HepG2 (cell line): ENCODE measurements at regions of chr17 and their contacts with region 1.

Region 1: DNA sequence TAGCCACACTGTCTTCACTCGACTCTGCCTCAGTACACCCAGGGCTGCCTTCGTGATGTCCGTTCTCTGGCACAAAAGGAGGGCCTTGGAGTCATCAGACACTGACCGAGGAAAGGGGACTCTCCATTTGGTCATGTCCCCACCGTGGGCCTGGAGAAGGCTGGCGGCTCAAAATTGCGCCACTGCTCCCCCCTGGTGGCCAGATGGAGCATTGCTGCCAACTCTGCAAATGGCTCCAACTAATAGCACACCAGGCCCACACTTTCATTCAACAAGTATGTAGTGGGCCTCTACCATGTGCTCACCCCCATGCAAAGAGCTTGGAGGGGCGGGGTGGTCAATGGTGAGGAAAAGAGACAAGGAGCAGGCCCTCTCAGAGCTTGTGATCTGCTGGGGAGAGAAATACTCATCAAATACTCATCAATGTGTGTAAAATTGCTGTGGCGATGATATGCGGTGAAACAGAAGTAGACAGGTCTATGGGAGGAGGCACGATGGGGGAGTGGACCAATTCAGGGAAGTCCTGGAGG is 5.2 kb upstream of the GRIN2C start:
- DNase-seq: peak; percentile 56
- ATAC-seq: peak; percentile 56
- H3K4me3 ChIP-seq: no peak overlapping the region
- H3K27ac ChIP-seq: no peak overlapping the region
- H3K4me1 ChIP-seq: peaks cover 58% of the 10 kb centered on the region
- H3K27me3 ChIP-seq: peaks cover 2 to 13% of the 10 kb centered on the region in 2 experiments; a peak in 3 of 5 replicates
- CTCF ChIP-seq: peak; percentile 98
- EP300 ChIP-seq: no peak
- POLR2A ChIP-seq: no peak
- RAD21 ChIP-seq: peak; percentile 81

Region 2: GRCh38 chr17:74842599-74843351 is 22.2 kb before region 1 on chr17:
- CTCF ChIA-PET with region 1: interaction called, 8 read pairs
- POLR2A ChIA-PET with region 1: interaction called, 6 read pairs
- in situ Hi-C with region 1: no loop called
- intact Hi-C with region 1: loop called (anchors 2 kb)
- DNase-seq: peak; percentile 52
- ATAC-seq: peak; percentile 84
- H3K4me3 ChIP-seq: peak overlapping the region; percentile 23 to 71 (median 50); a peak in 5 of 6 replicates
- H3K27ac ChIP-seq: no peak overlapping the region
- H3K4me1 ChIP-seq: peaks cover 16% of the 10 kb centered on the region
- H3K27me3 ChIP-seq: peaks cover 0 to 13% of the 10 kb centered on the region in 2 experiments; a peak in 2 of 5 replicates
- CTCF ChIP-seq: peak; percentile 78
- EP300 ChIP-seq: no peak
- POLR2A ChIP-seq: no peak; a peak in 1 of 4 replicates
- RAD21 ChIP-seq: peak; percentile 94

Region 3: DNA sequence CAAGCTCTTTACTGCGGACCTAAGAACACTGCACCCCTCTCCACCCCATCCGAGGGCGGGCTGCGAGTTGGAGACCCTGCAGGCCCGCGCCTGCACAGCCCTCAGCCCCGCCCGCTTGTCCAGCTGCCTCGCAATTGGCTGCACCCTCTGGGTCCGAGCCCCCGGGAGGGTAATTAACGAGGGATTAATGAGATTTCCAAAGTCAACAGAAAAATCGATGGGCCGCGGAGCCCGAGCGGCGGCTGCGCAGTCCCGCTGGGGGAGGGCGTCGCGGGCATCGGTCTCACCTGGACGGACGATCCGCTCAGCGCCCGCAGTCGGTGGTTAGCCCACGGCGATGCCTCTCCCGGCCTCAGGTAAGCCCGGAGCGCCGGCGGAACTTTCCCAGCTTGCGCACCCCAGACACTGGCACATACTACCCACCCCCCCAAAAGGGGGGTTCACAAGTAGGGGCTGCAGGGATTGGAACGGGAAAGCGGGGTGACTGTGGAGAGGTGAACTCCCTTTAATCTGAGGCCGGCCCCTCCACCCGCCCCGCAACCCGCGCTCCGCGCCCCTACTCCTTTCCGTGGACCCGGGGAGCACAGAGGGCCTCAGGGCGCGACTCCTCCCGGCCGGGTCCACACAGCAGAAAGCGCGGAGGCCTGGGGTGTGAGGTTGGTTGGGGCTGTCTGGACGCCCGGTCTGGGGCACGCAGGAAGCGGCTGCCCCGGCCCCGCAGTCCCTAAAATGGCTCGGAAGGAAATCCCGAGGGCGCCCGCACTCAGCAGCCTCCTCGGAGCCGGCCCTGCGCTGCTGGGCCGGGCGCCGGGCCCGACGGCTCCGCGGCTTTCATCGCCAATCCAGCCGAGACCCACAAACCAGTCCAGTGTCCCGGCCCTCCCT is 70.9 kb after region 1 on chr17 and contains the start of gene OTOP3:
- CTCF ChIA-PET with region 1: no interaction called
- POLR2A ChIA-PET with region 1: no interaction called
- in situ Hi-C with region 1: no loop called
- intact Hi-C with region 1: no loop called
- DNase-seq: no peak
- ATAC-seq: peak; percentile 48
- H3K4me3 ChIP-seq: peak within 1 kb of the TSS in 1 of 3 experiments; percentile 7; a peak in 1 of 6 replicates
- H3K27ac ChIP-seq: no peak within 1 kb of the TSS
- H3K4me1 ChIP-seq: no peaks in the 10 kb centered on the region
- H3K27me3 ChIP-seq: peaks cover 18 to 91% of the 10 kb centered on the region in 2 experiments
- CTCF ChIP-seq: no peak
- EP300 ChIP-seq: no peak
- POLR2A ChIP-seq: no peak
- RAD21 ChIP-seq: no peak
- total RNA-seq, gene OTOP3: not detected in 2 replicates